ENCODE measurements at regions of chr5 and their contacts with region 1.

Region 1: DNA sequence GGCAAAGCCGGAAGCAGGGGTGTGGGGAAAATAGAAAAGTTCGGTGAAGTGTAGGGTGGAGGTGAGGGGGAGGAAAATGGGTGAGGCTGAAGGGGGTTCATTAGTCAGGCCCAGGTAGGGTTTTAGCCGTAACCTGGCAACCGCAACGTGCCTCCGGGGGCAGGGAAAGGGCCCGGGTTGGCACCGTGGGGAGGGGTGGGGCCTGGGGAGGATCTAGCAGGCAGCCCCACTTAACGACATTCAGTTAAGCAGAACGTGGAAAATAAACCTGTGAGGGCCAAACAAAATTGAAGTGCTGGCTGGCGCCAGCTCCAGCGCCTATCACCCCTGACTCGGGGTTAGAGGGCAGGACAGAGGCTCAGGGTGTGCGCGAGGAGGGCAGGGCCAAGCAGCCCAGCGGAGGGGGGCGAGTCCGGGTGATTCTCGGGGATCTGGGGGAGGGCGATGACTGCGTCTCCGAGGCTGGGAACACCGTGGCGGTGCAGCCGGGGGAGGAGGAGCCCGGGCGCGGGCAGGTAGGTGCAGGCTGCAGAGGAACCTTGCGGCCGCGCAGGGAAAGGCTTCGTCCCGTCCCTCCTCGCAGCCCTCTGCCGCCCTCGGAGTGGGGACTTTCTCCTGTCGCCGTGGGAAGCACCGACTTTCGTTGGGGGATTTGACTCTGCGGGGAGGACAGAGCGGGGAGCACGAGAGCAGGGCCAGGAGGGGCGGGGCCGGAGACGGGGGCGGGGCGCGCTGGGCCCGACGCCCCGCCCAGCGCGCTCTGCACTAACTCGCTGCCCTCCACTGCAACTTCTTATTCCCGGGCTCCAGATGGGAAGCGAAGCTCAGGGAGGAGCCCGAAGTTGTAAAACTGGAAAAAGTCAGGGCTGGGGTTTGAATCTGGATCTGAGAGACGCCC is 5.1 kb downstream of the RGS14 start:
- DNase-seq: peak; percentile 41 to 68
- ATAC-seq: peak; percentile 32 to 55 (median 47)
- H3K4me3 ChIP-seq: peak overlapping the region; percentile 9 to 55 (median 44)
- H3K27ac ChIP-seq: peak overlapping the region in 1 of 10 donors; percentile 74
- H3K4me1 ChIP-seq: peaks cover 3 to 86% (median 43%) of the 10 kb centered on the region in 9 donors
- H3K27me3 ChIP-seq: no peaks in the 10 kb centered on the region
- CTCF ChIP-seq: no peak

Region 2: DNA sequence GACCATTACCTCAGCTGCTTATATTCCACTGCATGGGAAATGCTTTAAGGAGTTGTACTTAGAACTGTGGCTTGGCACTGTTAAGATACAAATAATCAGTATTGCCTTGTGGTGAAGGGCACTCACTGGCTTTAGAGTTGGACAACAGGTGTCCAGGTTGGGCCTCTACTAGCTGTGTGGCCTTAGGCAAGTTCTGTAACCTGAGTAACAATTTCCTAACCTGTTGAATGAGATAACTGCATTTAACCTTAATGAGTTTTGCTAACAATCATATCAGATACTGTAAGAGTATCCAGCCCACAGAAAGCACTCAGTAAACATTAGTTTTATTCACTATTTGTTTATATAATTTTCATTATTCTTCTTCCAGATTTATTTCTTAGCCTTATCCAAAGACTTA is 446.5 kb before region 1 on chr5:
- intact Hi-C with region 1: no loop called
- DNase-seq: no peak
- ATAC-seq: no peak
- H3K4me3 ChIP-seq: no peak overlapping the region
- H3K27ac ChIP-seq: peak overlapping the region in 1 of 10 donors; percentile 17
- H3K4me1 ChIP-seq: no peaks in the 10 kb centered on the region
- H3K27me3 ChIP-seq: no peaks in the 10 kb centered on the region
- CTCF ChIP-seq: no peak

Region 3: DNA sequence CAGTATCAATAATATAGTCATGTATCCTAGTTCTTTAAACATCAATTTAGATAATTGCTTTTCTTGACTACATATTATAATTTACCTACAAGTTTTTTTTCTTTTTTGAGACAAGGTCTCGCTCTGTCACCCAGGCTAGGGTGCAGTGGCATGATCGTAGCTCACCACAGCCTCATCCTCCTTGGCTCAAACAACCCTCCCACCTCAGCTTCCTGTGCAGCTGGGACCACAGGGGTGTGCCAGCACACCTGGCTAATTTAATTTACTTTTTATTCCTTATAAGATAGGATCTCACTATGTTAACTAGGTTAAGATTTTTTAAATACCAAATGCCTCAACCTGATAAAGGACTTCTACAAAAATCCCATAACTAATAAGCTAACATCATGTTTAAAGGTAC is 377.3 kb before region 1 on chr5:
- intact Hi-C with region 1: no loop called
- DNase-seq: no peak
- ATAC-seq: peak in 1 of 8 donors; percentile 45
- H3K4me3 ChIP-seq: no peak overlapping the region
- H3K27ac ChIP-seq: peak overlapping the region in 3 of 10 donors; percentile 6 to 62 (median 23)
- H3K4me1 ChIP-seq: peaks cover 0 to 40% (median 10%) of the 10 kb centered on the region in 9 donors
- H3K27me3 ChIP-seq: no peaks in the 10 kb centered on the region
- CTCF ChIP-seq: no peak

Region 4: DNA sequence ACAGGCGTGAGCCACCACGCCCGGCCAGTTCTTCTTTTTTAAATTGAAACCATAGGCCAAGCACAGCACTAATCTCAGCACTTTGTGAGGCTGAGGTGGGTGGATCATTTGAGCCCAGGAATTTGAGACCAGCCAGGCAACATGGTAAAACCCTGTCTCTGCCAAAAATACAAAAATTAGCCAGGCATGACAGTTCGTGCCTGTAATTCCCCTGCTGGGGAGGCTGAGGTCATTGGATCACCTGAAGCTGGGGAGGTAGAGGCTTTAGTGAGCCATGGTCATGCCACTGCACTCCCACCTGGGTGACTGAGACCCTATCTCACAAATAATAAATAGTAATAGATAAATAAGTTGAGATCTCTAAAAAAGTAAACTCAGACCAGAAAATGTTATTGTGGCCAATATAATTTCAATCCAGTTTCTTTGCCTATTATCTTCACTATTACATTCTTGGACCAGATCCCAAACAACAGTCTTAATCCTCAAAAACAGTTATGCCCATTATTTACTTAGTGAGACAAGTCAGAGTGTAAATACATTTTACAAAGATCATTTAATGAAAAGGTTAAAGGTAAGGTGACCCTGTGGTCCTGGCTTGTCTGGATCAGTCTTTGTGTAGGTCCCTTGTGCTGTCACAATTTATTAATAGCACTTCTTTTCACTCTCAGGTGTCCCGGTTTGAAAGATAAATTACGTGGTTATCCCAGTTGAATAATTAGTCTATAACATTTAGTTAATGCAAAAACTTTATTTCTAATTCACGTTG is 112.9 kb before region 1 on chr5:
- intact Hi-C with region 1: no loop called
- DNase-seq: no peak
- ATAC-seq: peak in 2 of 8 donors; percentile 45 to 69
- H3K4me3 ChIP-seq: no peak overlapping the region
- H3K27ac ChIP-seq: peak overlapping the region in 3 of 10 donors; percentile 13 to 29 (median 26)
- H3K4me1 ChIP-seq: peaks cover 0 to 18% (median 0%) of the 10 kb centered on the region in 9 donors
- H3K27me3 ChIP-seq: no peaks in the 10 kb centered on the region
- CTCF ChIP-seq: no peak

Region 5: GRCh38 chr5:177311723-177312648 is 50.9 kb before region 1 on chr5 and contains the start of gene MXD3:
- intact Hi-C with region 1: loop called in 1 of 10 experiments (anchors 10 kb)
- DNase-seq: peak; percentile 95 to 97
- ATAC-seq: peak; percentile 85 to 96 (median 92)
- H3K4me3 ChIP-seq: peak within 1 kb of the TSS; percentile 34 to 70 (median 58)
- H3K27ac ChIP-seq: peak within 1 kb of the TSS in 1 of 10 donors; percentile 97
- H3K4me1 ChIP-seq: peaks cover 14 to 63% (median 28%) of the 10 kb centered on the region in 9 donors
- H3K27me3 ChIP-seq: no peaks in the 10 kb centered on the region
- CTCF ChIP-seq: no peak
- total RNA-seq, gene MXD3: 1.2 to 6.4 (median 2.4) TPM

Region 6: GRCh38 chr5:177958696-177959095 is 595.8 kb after region 1 on chr5:
- intact Hi-C with region 1: no loop called
- DNase-seq: no peak
- ATAC-seq: no peak
- H3K4me3 ChIP-seq: no peak overlapping the region
- H3K27ac ChIP-seq: no peak overlapping the region
- H3K4me1 ChIP-seq: no peaks in the 10 kb centered on the region
- H3K27me3 ChIP-seq: no peaks in the 10 kb centered on the region
- CTCF ChIP-seq: no peak